Activated T-helper 1 cell treated with anti-CD3 and anti-CD28 coated beads, Interleukin-12 subunit alpha, Interleukin-12 subunit beta, Interleukin-2, Interleukin-4 antibody, amounts not matched to agents 30 ng/mL and 10 ng/mL and 1 ng/mL, durations not matched to agents 14 hours and 24 hours and 36 hours (primary cell): ENCODE measurements at regions of chr22 and their contacts with region 1.

Region 1: GRCh38 chr22:23786752-23787599 is at the start of gene SMARCB1:
- DNase-seq: peak; percentile 84
- H3K4me3 Mint-ChIP-seq: peak within 1 kb of the TSS; percentile 92
- H3K27ac Mint-ChIP-seq: peak within 1 kb of the TSS; percentile 92
- H3K4me1 Mint-ChIP-seq: peaks cover 34% of the 10 kb centered on the region
- H3K27me3 Mint-ChIP-seq: peaks cover 2% of the 10 kb centered on the region
- total RNA-seq, gene SMARCB1: 92.4 and 99.8 TPM in 2 replicates

Region 2: DNA sequence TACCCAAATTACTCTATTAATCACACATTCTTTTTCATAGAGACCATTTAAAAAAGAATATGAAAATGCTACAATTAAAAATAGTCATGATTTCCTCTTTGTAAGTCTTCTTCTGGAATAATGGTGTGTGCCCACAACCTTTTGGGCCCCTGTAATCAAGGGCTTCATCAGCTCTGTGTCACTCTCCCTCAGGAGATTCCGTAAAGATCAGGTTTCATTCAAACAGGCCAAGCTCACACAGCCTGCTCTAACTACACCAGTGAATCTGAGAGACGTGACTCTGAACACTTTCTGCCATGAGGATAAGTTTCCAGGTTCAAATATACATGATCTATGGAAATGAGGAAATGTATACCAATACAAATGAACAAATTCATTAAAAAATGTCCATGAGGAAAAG is 164.3 kb before region 1 on chr22:
- intact Hi-C with region 1: no loop called
- DNase-seq: no peak
- H3K4me3 Mint-ChIP-seq: no peak overlapping the region
- H3K27ac Mint-ChIP-seq: no peak overlapping the region
- H3K4me1 Mint-ChIP-seq: peaks cover 5% of the 10 kb centered on the region
- H3K27me3 Mint-ChIP-seq: peaks cover under 1% of the 10 kb centered on the region

Region 3: GRCh38 chr22:23716811-23717801 is 69.9 kb before region 1 on chr22:
- intact Hi-C with region 1: loop called (anchors 1 kb)
- DNase-seq: peak; percentile 81
- H3K4me3 Mint-ChIP-seq: peak overlapping the region; percentile 79
- H3K27ac Mint-ChIP-seq: peak overlapping the region; percentile 79
- H3K4me1 Mint-ChIP-seq: peaks cover 8% of the 10 kb centered on the region
- H3K27me3 Mint-ChIP-seq: peaks cover 3% of the 10 kb centered on the region

Region 4: GRCh38 chr22:23750714-23751440 is 36.1 kb before region 1 on chr22 and contains the start of gene ZNF70:
- intact Hi-C with region 1: loop called (anchors 5 kb)
- DNase-seq: peak; percentile 77
- H3K4me3 Mint-ChIP-seq: peak within 1 kb of the TSS; percentile 85
- H3K27ac Mint-ChIP-seq: peak within 1 kb of the TSS; percentile 61
- H3K4me1 Mint-ChIP-seq: peaks cover 12% of the 10 kb centered on the region
- H3K27me3 Mint-ChIP-seq: peaks cover 7% of the 10 kb centered on the region
- total RNA-seq, gene ZNF70: 2.1 and 2.2 TPM in 2 replicates

Region 5: DNA sequence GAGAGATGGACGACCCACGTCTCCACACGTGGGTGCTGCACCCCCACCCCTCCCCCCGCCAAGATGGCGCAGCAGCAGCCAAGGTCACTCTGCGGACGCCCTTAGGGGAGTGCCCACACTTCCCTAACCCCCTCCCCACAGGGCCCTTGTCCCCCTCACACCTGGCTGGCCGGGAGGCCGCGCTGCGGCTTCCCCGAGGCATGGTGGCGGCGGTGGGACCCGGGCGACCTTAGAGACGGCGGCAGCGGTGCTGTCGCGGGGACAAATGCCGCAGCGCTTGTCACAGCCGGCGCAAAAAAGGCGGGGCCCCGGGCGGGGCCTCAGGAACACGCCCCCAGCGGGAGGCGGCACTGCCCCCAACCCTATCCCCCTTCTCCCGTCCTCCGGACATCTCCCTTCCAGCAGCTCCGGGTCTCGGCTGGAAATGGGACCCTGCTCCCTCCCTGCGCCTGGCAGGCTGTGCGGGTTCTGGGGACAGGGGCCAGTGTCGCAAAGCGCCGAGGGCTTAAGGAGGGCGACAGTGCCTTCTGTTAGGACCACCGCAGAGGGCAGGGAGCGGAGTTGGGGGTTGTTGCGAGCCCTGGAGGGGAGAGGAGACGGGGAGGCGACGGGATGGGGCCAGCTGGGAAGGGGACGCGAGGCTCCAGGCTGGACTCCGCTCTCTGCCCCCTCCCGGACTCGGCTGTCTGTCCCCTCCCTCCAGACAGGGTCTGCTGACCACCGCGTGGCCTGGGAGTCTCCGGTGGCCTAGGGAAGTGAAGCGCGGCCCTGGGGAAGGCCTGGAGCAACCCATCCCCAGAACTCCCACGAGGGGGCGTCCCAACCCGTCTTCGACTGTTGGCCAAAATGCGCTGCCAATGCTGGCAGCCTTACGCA is 19.1 kb before region 1 on chr22 and contains the start of gene CHCHD10:
- intact Hi-C with region 1: loop called (anchors 1 kb)
- DNase-seq: peak; percentile 77
- H3K4me3 Mint-ChIP-seq: peak within 1 kb of the TSS; percentile 86
- H3K27ac Mint-ChIP-seq: peak within 1 kb of the TSS; percentile 67
- H3K4me1 Mint-ChIP-seq: peaks cover 24% of the 10 kb centered on the region
- H3K27me3 Mint-ChIP-seq: peaks cover 6% of the 10 kb centered on the region
- total RNA-seq, gene CHCHD10: 89.1 and 96.4 TPM in 2 replicates

Region 6: GRCh38 chr22:23857606-23858483 is 70.9 kb after region 1 on chr22 and contains the start of gene SLC2A11:
- intact Hi-C with region 1: loop called (anchors 2 kb)
- DNase-seq: peak; percentile 93
- H3K4me3 Mint-ChIP-seq: peak within 1 kb of the TSS; percentile 88
- H3K27ac Mint-ChIP-seq: peak within 1 kb of the TSS; percentile 75
- H3K4me1 Mint-ChIP-seq: peaks cover 21% of the 10 kb centered on the region
- H3K27me3 Mint-ChIP-seq: peaks cover 4% of the 10 kb centered on the region
- total RNA-seq, gene SLC2A11: 8.3 and 8.4 TPM in 2 replicates

Region 7: GRCh38 chr22:23893943-23894709 is 107.2 kb after region 1 on chr22 and contains the start of gene MIF:
- intact Hi-C with region 1: loop called (anchors 1 kb)
- DNase-seq: peak; percentile 99
- H3K4me3 Mint-ChIP-seq: peak within 1 kb of the TSS; percentile 98
- H3K27ac Mint-ChIP-seq: peak within 1 kb of the TSS; percentile 99
- H3K4me1 Mint-ChIP-seq: peaks cover 22% of the 10 kb centered on the region
- H3K27me3 Mint-ChIP-seq: no peaks in the 10 kb centered on the region
- total RNA-seq, gene MIF: 1,136 and 1,212 TPM in 2 replicates

Region 8: DNA sequence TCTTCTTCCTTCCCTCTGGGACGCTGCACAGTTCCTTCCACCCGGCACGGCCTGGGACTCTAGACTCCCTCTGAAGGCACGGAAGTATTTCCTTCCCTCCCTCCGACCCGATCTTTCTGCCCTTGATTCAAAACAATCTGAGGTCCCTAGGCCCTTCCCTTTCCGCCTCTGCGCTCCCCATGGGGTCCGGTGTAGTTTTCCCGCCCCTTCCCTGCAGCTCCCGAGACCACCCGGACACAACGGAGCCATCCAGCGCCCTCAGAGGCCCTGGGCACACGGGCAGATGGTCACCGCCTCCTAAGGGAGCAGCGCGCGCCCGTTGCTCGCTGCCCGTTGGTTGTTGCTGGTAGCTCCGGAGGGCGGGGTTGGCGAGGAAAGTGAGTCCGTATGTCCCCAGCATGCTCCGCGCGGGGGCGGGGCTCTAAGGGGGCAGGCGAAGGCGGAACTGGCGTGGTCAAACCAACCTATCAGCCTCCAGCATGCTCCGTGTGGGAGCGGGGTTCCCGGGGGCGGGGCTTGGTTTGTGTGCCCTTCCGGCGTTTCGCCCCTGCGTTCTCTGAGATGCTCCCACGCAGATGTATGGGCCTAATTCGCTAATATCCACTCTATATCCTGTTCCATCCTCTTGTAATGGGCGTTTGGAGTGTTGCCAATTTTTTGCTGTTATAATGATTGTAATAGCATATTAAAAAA is 126.8 kb after region 1 on chr22:
- intact Hi-C with region 1: loop called (anchors 1 kb)
- DNase-seq: peak; percentile 100
- H3K4me3 Mint-ChIP-seq: peak overlapping the region; percentile 95
- H3K27ac Mint-ChIP-seq: peak overlapping the region; percentile 97
- H3K4me1 Mint-ChIP-seq: peaks cover 24% of the 10 kb centered on the region
- H3K27me3 Mint-ChIP-seq: no peaks in the 10 kb centered on the region